ENCODE measurements at regions of chr11 and their contacts with region 1.

Region 1: DNA sequence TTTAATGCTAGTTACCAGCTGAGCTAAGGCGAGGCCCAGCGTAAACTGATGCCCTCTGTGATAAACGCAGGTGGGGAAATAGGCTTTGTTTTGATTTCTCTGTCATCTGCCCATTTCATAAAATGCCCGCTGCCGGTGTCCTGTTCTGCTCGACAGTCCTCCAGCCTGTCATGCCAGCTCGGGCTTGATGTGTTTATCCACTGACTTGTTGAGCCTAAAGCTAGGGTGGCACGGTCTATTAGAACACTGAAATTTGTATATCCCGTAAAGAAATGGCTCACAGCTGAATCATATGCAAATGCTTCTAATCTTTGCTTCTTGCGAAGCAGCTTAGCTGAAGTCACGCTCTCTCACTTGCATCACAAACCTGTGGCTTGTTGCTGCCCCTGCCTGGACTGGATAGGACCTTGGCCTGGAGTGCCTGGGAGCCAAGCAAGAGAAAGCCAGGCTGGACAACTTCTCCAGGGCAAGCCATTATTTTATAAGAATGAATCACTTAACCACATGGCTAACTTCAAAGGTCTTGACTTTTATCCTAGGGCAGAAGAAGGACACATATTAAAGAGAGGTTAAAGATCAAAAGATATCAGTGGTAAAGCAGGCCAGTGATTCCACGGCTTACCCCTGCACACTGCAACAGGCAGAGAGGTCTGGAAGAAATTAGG is 33.1 kb downstream of the EHF start:
- DNase-seq: peak; percentile 73 to 91 (median 84)
- H3K4me3 ChIP-seq: no peak overlapping the region
- H3K4me3 Mint-ChIP-seq: peak overlapping the region in 1 of 2 donors; percentile 33
- H3K27ac ChIP-seq: peak overlapping the region; percentile 48 to 80
- H3K27ac Mint-ChIP-seq: peak overlapping the region; percentile 81 to 95 (median 91)
- H3K4me1 ChIP-seq: peaks cover 45 to 51% of the 10 kb centered on the region in 2 donors
- H3K4me1 Mint-ChIP-seq: peaks cover 53% of the 10 kb centered on the region
- H3K27me3 ChIP-seq: no peaks in the 10 kb centered on the region
- H3K27me3 Mint-ChIP-seq: peaks cover 0 to 3% (median 0%) of the 10 kb centered on the region in 3 donors
- CTCF ChIP-seq: no peak

Region 2: DNA sequence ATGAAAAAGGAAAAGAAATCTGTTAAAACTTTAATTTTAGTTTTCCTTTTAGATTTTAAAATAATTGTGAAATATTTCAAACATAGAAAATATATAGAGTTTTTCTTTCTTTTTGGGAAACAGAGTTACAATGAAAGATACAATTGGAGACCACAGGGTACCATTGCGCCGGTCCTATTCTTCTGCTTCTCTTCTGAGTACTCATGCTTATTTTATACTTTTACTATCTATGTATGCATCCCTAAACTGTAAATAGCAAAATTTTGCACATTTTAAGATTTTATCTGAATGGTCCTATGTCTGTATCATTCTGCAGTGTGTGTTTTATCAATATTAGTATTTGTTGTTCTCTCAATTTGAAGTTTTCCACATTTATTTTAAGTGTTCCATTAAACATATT is 31.9 kb after region 1 on chr11:
- intact Hi-C with region 1: no loop called
- DNase-seq: no peak
- H3K4me3 ChIP-seq: no peak overlapping the region
- H3K4me3 Mint-ChIP-seq: no peak overlapping the region
- H3K27ac ChIP-seq: no peak overlapping the region
- H3K27ac Mint-ChIP-seq: no peak overlapping the region
- H3K4me1 ChIP-seq: no peaks in the 10 kb centered on the region
- H3K4me1 Mint-ChIP-seq: no peaks in the 10 kb centered on the region
- H3K27me3 ChIP-seq: no peaks in the 10 kb centered on the region
- H3K27me3 Mint-ChIP-seq: no peaks in the 10 kb centered on the region
- CTCF ChIP-seq: no peak

Region 3: GRCh38 chr11:35030716-35031213 is 376.8 kb after region 1 on chr11:
- intact Hi-C with region 1: loop called in 1 of 2 experiments (anchors 10 kb)
- DNase-seq: peak; percentile 93 to 98 (median 97)
- H3K4me3 ChIP-seq: peak overlapping the region in 2 of 3 experiments; percentile 11 to 12
- H3K4me3 Mint-ChIP-seq: peak overlapping the region; percentile 74 to 91
- H3K27ac ChIP-seq: peak overlapping the region; percentile 79 to 98
- H3K27ac Mint-ChIP-seq: peak overlapping the region; percentile 94 to 100 (median 99)
- H3K4me1 ChIP-seq: peaks cover 33 to 35% of the 10 kb centered on the region in 2 donors
- H3K4me1 Mint-ChIP-seq: peaks cover 56% of the 10 kb centered on the region
- H3K27me3 ChIP-seq: no peaks in the 10 kb centered on the region
- H3K27me3 Mint-ChIP-seq: peaks cover 0 to 2% (median 0%) of the 10 kb centered on the region in 3 donors
- CTCF ChIP-seq: no peak